ENCODE measurements at regions of chr16 and their contacts with region 1.

Region 1: GRCh38 chr16:58515125-58515870 is at the start of gene SETD6:
- DNase-seq: peak; percentile 70
- ATAC-seq: peak; percentile 80
- H3K4me3 ChIP-seq: peak within 1 kb of the TSS; percentile 72 to 85
- H3K27ac ChIP-seq: peak within 1 kb of the TSS; percentile 88
- H3K4me1 ChIP-seq: peaks cover 5 to 22% of the 10 kb centered on the region in 2 experiments; a peak in 3 of 4 replicates
- H3K27me3 ChIP-seq: no peaks in the 10 kb centered on the region
- CTCF ChIP-seq: no peak; a peak in 1 of 6 replicates
- POLR2A ChIP-seq: peak; percentile 60
- RAD21 ChIP-seq: no peak
- total RNA-seq, gene SETD6: 26.6 TPM

Region 2: DNA sequence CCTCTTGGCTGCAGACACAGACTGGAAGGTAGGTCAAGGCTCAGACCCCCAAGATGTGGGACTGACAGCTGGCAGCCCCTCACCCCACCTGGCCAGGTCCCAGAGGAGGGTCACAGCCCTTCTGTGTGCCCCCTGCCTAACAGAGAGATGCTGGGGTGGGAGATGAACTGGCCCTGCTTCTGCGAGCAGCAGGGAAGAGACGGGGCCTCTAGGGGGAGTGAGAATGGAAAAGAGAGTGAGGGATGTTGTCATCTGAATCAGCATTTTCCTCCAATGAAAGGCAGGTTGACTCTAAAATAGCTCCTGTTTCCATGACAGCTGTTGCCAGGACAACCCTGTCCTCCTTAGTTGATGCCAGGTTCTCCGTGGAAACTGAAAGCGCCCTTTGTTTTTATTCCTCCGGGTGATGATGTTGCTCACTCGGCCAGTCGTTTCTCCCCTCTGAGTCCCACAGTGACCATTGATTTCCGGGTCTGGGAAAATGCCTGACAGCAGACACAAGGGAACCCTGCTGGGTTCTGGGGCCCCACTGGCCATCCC is 20.2 kb before region 1 on chr16:
- CTCF ChIA-PET with region 1: interaction called, 13 read pairs
- POLR2A ChIA-PET with region 1: interaction called, 6 read pairs
- RAD21 ChIA-PET with region 1: no interaction called
- intact Hi-C with region 1: no loop called
- DNase-seq: peak; percentile 92
- ATAC-seq: peak; percentile 58
- H3K4me3 ChIP-seq: no peak overlapping the region
- H3K27ac ChIP-seq: no peak overlapping the region
- H3K4me1 ChIP-seq: peaks cover 0 to 25% of the 10 kb centered on the region in 2 experiments; a peak in 3 of 4 replicates
- H3K27me3 ChIP-seq: no peaks in the 10 kb centered on the region
- CTCF ChIP-seq: peak; percentile 48 to 77 (median 61); a peak in 5 of 6 replicates
- POLR2A ChIP-seq: no peak
- RAD21 ChIP-seq: peak; percentile 37; the same call in 1 of the 2 replicates

Region 3: DNA sequence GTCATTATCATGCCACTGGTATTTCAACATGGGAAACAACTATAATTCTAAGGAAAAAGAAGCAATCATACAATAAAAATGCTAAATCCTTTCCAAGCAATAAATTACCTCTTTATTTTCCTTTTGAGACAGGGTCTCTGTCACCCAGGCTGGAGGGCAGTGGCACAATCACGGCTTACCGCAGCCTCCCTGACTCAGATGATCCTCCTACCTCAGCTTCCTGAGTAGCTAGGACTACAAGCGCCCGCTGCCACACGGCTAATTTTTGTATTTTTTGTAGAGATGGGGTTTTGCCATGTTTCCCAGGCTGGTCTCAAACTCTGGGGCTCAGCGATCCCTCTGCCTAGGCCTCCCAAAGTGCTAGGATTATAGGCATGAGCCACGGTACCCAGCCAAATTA is 90.3 kb after region 1 on chr16:
- CTCF ChIA-PET with region 1: no interaction called
- POLR2A ChIA-PET with region 1: no interaction called
- RAD21 ChIA-PET with region 1: no interaction called
- intact Hi-C with region 1: no loop called
- DNase-seq: no peak
- ATAC-seq: no peak
- H3K4me3 ChIP-seq: no peak overlapping the region
- H3K27ac ChIP-seq: no peak overlapping the region
- H3K4me1 ChIP-seq: peaks cover 0 to 4% of the 10 kb centered on the region in 2 experiments; a peak in 2 of 4 replicates
- H3K27me3 ChIP-seq: no peaks in the 10 kb centered on the region
- CTCF ChIP-seq: no peak
- POLR2A ChIP-seq: no peak
- RAD21 ChIP-seq: no peak

Region 4: GRCh38 chr16:58638148-58639036 is 123.1 kb after region 1 on chr16:
- CTCF ChIA-PET with region 1: interaction called, 3 read pairs
- POLR2A ChIA-PET with region 1: no interaction called
- RAD21 ChIA-PET with region 1: no interaction called
- intact Hi-C with region 1: loop called (anchors 1 kb)
- DNase-seq: peak; percentile 54
- ATAC-seq: peak; percentile 99
- H3K4me3 ChIP-seq: no peak overlapping the region
- H3K27ac ChIP-seq: no peak overlapping the region
- H3K4me1 ChIP-seq: peaks cover 8 to 14% of the 10 kb centered on the region in 2 experiments; a peak in 3 of 4 replicates
- H3K27me3 ChIP-seq: no peaks in the 10 kb centered on the region
- CTCF ChIP-seq: peak; percentile 41 to 72 (median 46); a peak in 4 of 6 replicates
- POLR2A ChIP-seq: no peak
- RAD21 ChIP-seq: peak; percentile 90

Region 5: DNA sequence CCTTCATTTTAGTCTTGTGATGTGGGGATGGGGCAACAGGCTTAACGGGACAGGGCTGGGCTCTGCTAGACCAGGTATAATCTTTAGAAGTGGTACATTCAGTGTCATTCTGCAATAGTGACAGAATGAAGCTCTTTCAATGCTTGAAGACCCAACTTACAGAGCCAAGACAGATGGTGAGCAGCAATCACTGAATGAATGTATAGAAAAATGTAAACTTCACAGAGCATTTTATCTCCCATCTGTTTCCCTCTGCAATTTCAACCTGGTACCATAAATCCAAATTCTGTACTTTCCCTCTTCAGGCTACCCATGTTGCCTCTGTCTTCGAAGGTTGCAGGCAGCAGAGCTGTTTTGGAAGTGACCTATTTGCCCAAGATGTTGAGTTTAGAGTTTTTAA is 252.3 kb after region 1 on chr16:
- CTCF ChIA-PET with region 1: no interaction called
- POLR2A ChIA-PET with region 1: no interaction called
- RAD21 ChIA-PET with region 1: no interaction called
- intact Hi-C with region 1: no loop called
- DNase-seq: no peak
- ATAC-seq: no peak
- H3K4me3 ChIP-seq: no peak overlapping the region
- H3K27ac ChIP-seq: no peak overlapping the region
- H3K4me1 ChIP-seq: no peaks in the 10 kb centered on the region
- H3K27me3 ChIP-seq: peaks cover 22% of the 10 kb centered on the region; the same call in 1 of the 2 replicates
- CTCF ChIP-seq: no peak
- POLR2A ChIP-seq: no peak
- RAD21 ChIP-seq: no peak